Pancreas (tissue), 10 donors: ENCODE measurements at regions of chr10 and their contacts with region 1.

Region 1: GRCh38 chr10:47384148-47384921 is at the start of gene ZNF488:
- DNase-seq: peak; percentile 84 to 95 (median 92)
- ATAC-seq: peak; percentile 95 to 99 (median 98)
- H3K4me3 ChIP-seq: peak within 1 kb of the TSS; percentile 65 to 93 (median 78)
- H3K27ac ChIP-seq: peak within 1 kb of the TSS; percentile 13 to 79 (median 49)
- H3K4me1 ChIP-seq: peaks cover 3 to 18% (median 10%) of the 10 kb centered on the region in 3 donors
- H3K27me3 ChIP-seq: no peaks in the 10 kb centered on the region
- CTCF ChIP-seq: no peak
- total RNA-seq, gene ZNF488: 0.09 to 0.16 TPM in 2 of 6 donors, not detected in the others

Region 2: GRCh38 chr10:46284293-46285229 is 1099.8 kb before region 1 on chr10:
- intact Hi-C with region 1: loop called in 1 of 3 experiments (anchors 10 kb)
- DNase-seq: peak; percentile 81 to 94 (median 88)
- ATAC-seq: peak; percentile 90 to 96 (median 93)
- H3K4me3 ChIP-seq: peak overlapping the region; percentile 41 to 81 (median 52)
- H3K27ac ChIP-seq: peak overlapping the region in 1 of 4 donors; percentile 46
- H3K4me1 ChIP-seq: no peaks in the 10 kb centered on the region
- H3K27me3 ChIP-seq: no peaks in the 10 kb centered on the region
- CTCF ChIP-seq: no peak